GM10248 (cell line): ENCODE measurements at regions of chr4 and their contacts with region 1.

Region 1: DNA sequence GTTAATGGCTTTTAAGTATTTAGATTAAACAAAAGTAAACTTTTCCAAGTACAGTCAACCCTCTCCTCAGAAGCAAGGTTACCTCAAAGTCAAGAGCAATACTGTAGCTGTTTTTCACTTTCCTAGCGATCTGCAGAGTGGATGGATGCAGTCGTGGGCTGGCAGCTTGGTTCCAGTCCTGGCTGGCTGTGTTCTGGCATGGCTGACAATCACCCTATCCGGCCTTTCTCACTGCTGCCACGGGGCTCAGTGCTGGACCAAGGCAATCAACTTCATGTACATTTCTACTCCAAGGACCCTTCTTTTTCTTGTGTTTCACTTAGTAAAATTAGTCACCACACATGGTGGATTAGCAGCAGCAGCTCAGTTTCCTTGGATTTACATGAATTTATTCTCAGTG is 208.3 kb downstream of the GABRB1 start:
- DNase-seq: no peak
- CTCF ChIP-seq: no peak

Region 2: GRCh38 chr4:47221721-47222120 is 17.9 kb before region 1 on chr4:
- CTCF ChIA-PET with region 1: interaction called, 11 read pairs
- POLR2A ChIA-PET with region 1: no interaction called
- DNase-seq: no peak
- CTCF ChIP-seq: no peak